Calu3 (cell line): ENCODE measurements at regions of chr17 and their contacts with region 1.

Region 1: DNA sequence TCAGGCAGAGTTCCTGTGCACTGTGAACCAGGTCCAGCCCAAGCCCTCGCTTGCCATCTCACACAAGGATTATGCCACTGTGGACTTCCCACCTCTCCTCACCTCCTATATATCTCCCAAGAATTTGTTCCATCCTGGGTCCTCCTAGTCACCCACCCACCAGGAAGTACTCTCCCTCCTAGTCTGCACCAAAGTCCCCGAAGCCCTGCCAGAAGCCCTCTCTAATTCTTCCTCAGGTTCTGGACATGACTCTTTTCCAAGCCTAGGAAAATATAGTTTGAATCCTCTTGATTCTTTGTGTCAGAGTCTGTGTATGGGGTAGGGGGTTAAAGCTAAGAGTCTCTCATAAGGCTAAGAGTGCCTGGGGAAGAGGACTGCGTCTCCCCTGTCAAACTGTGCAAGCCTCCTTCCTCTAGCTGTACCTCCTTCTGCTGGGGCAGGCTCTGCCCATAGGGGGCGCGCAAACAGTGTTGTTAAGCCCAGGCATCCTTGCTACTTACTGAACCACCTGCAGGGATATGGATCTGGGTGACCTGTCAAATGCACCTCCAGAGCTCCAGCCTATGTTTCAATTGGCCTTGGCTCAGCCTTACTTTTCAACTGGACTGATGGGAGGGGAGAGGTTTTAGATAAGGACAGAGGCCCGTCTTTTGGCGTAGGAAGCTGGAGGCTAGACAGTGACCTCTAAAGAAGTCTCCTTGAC is 16.6 kb upstream of the DLX4 start:
- DNase-seq: peak; percentile 96
- H3K4me3 Mint-ChIP-seq: no peak overlapping the region
- H3K27ac Mint-ChIP-seq: no peak overlapping the region
- H3K4me1 Mint-ChIP-seq: no peaks in the 10 kb centered on the region
- H3K27me3 Mint-ChIP-seq: peaks cover 87% of the 10 kb centered on the region
- CTCF ChIP-seq: peak; percentile 95

Region 2: GRCh38 chr17:49880291-49881053 is 71.9 kb before region 1 on chr17:
- CTCF ChIA-PET with region 1: no interaction called
- intact Hi-C with region 1: loop called (anchors 5 kb)
- DNase-seq: peak; percentile 95
- H3K4me3 Mint-ChIP-seq: peak overlapping the region; percentile 31
- H3K27ac Mint-ChIP-seq: no peak overlapping the region
- H3K4me1 Mint-ChIP-seq: peaks cover 9% of the 10 kb centered on the region
- H3K27me3 Mint-ChIP-seq: peaks cover 52% of the 10 kb centered on the region
- CTCF ChIP-seq: peak; percentile 99

Region 3: DNA sequence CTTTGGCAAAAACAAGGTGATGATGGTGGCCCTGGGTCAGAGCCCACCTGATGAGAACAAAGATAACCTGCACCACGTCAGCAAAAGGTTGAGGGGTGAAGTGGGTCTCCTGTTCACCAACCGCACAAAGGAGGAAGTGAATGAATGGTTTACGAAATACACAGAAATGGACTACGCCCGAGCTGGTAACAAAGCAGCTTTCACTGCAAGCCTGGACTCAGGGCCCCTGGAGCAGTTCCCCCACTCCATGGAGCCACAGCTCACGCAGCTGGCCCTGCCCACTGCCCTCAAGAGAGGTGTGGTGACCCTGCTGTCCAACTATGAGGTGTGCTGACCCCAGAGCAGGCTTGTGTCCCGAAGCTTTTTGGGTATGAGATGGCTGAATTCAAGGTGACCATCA is 13.0 kb before region 1 on chr17:
- CTCF ChIA-PET with region 1: interaction called, 23 read pairs
- intact Hi-C with region 1: no loop called
- DNase-seq: peak; percentile 61
- H3K4me3 Mint-ChIP-seq: no peak overlapping the region
- H3K27ac Mint-ChIP-seq: peak overlapping the region; percentile 19
- H3K4me1 Mint-ChIP-seq: peaks cover 9% of the 10 kb centered on the region
- H3K27me3 Mint-ChIP-seq: peaks cover 76% of the 10 kb centered on the region
- CTCF ChIP-seq: no peak

Region 4: GRCh38 chr17:49963626-49964302 is 11.4 kb after region 1 on chr17:
- CTCF ChIA-PET with region 1: interaction called, 11 read pairs
- intact Hi-C with region 1: no loop called
- DNase-seq: no peak
- H3K4me3 Mint-ChIP-seq: no peak overlapping the region
- H3K27ac Mint-ChIP-seq: no peak overlapping the region
- H3K4me1 Mint-ChIP-seq: peaks cover 11% of the 10 kb centered on the region
- H3K27me3 Mint-ChIP-seq: peaks cover 84% of the 10 kb centered on the region
- CTCF ChIP-seq: no peak

Region 5: DNA sequence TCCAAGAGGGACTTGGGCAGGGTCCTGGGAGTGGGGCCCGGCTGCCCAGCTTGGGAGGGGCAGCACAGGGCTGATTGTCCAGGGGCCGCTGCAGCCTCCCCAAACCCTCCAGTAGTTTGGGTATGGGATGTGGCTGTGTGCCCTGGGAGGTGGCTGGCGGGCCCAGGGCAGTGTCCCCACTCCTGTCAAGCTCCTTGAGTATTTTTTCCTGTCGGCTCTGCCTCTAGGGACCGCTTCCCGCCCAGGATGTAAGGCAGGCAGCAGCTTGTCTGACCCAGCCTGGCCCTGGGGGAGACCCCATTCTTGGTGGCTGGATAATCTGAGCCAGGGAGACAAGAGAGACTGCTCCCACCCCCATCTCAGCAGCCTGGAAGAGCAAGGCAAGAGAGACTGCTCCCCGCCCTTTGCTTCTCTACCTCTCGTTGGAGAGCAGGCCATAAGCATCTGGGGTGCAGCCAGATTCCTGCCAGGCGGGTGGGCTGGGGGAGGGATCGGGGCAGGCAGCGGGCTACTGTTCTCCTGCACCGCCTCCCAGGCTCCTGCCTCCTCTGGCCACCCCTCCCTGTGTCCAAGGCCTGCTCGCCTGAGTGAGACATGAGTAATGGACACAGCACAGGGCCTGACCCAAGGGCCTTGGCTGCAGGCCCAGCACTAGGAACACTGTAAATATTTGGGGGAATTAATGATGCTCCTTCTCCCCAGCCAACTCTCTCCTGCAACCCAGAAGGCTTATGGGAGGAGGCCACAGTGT is 85.1 kb after region 1 on chr17:
- CTCF ChIA-PET with region 1: no interaction called
- intact Hi-C with region 1: no loop called
- DNase-seq: no peak
- H3K4me3 Mint-ChIP-seq: no peak overlapping the region
- H3K27ac Mint-ChIP-seq: no peak overlapping the region
- H3K4me1 Mint-ChIP-seq: peaks cover 45% of the 10 kb centered on the region
- H3K27me3 Mint-ChIP-seq: no peaks in the 10 kb centered on the region
- CTCF ChIP-seq: no peak

Region 6: DNA sequence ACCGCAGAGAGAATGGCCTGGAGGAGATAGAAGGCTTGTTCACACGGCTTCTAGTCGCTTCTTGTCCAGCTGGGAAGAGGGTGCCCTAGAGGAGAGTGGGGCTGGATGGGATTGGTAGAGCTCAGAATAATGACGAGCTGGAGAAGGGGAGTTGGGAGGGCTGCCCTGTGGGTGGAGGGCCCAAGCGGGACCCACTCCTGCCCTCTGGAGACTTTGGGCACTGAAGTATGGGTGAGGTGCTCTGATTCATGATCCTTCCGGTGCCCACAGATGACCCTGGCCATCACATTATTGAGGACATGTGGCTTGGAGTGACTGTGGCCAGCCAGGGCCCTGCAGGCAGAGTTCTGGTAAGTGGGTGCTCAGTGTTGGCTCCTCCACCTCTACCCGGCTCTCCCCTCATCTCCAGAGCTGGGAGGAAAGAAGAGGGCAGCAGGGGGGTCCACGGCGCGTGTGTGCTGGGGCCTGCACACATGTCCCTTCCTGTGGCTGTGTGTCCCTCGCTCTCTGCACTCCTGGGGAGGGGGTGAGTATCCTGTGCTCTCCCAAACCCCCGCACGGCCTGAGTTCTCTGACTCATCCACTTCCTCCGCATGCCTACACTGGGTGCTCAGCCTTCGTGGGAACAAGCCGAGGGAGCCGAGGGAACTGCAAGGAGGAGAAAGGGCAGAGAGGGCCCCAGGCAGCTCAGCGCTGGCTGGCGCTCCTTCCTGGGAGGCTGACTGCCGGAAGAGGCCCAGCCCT is 112.1 kb after region 1 on chr17:
- CTCF ChIA-PET with region 1: no interaction called
- intact Hi-C with region 1: no loop called
- DNase-seq: peak; percentile 91
- H3K4me3 Mint-ChIP-seq: peak overlapping the region; percentile 64
- H3K27ac Mint-ChIP-seq: peak overlapping the region; percentile 87
- H3K4me1 Mint-ChIP-seq: peaks cover 80% of the 10 kb centered on the region
- H3K27me3 Mint-ChIP-seq: no peaks in the 10 kb centered on the region
- CTCF ChIP-seq: peak; percentile 16